Esophagus muscularis mucosa (tissue), 4 donors: ENCODE measurements at regions of chr20 and their contacts with region 1.

Region 1: DNA sequence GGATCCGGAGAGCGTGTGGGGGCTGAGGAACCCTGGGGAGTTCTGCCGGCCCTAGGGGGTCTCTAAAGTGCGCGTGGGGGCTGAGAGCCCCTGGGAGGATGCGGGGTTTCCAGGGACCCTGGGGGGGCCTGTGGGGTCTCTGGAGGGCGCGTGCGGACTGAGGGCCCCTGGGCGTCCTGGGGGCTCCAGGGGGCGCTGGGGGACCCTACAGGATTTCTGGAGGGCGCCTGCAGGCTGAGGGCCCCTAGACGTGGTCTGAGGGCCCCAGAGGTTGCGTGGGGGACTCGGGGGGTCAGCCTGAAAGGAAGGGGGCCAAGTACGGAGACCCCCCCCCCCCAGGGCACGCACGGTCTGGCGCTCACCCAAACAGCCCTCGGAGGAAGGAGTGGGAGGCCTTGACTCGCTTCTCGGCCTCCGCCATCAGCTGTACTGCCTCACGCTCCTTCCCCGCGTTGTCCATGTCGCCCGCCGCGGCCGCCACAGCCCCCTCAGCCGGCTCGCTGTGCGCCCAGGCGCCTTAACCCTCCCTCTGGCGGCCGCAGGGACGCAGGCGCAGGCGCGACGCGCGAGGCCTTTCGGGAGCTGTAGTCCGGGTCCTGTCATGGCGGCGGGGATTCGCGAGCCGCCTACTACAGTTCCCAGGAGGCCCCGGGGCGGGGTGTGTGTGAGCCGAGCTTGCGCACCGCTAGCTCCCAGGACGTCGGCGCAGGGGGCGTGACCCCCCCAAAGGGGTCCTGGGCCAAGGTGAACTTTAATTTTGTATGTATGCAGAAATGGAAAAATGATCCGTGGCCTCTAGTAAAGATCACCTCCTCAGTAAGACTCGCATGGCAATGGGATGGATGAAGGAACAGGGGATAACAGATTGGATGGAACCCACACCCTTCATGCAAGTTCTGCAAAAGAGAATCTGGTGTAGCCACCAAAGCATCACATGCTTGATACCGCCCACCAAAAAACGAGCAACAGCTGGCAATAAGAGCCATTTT is at the start of gene NAPB:
- DNase-seq: peak; percentile 98
- H3K4me3 ChIP-seq: peak within 1 kb of the TSS; percentile 83 to 95 (median 91)
- H3K27ac ChIP-seq: peak within 1 kb of the TSS; percentile 87 to 95 (median 90)
- H3K4me1 ChIP-seq: peaks cover 21 to 39% (median 39%) of the 10 kb centered on the region in 4 donors
- H3K27me3 ChIP-seq: peaks cover 0 to 4% (median 0%) of the 10 kb centered on the region in 4 donors
- CTCF ChIP-seq: peak; percentile 39 to 68 (median 61)
- EP300 ChIP-seq: no peak
- POLR2A ChIP-seq: peak; percentile 66
- total RNA-seq, gene NAPB: 13.7 to 18.7 (median 15.2) TPM

Region 2: DNA sequence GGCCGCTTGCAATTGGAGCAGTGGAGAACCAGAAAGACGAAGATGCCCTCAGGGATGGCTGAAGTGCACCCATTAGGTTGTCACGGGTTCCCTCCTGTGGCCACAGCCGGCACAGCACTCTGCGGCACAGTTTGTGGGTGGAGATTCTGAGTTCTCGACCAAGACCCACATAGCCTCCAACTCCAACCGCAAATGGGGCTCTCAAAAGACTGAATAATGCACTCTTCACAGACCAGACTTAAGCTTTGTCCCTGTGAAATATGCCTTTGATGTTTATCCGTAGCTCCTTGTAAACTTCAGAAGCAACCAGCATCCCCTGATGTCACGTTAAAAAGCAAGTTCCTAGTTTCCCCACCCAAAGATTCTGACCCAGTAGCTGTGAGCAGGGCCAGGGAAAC is 185.4 kb after region 1 on chr20:
- intact Hi-C with region 1: loop called (anchors 5 kb)
- DNase-seq: peak; percentile 94
- H3K4me3 ChIP-seq: no peak overlapping the region
- H3K27ac ChIP-seq: peak overlapping the region in 3 of 4 donors; percentile 8 to 63 (median 20)
- H3K4me1 ChIP-seq: peaks cover 0 to 52% (median 38%) of the 10 kb centered on the region in 4 donors
- H3K27me3 ChIP-seq: no peaks in the 10 kb centered on the region
- CTCF ChIP-seq: peak; percentile 82 to 97 (median 87)
- EP300 ChIP-seq: no peak
- POLR2A ChIP-seq: no peak